A673 (cell line): ENCODE measurements at regions of chr21 and their contacts with region 1.

Region 1: DNA sequence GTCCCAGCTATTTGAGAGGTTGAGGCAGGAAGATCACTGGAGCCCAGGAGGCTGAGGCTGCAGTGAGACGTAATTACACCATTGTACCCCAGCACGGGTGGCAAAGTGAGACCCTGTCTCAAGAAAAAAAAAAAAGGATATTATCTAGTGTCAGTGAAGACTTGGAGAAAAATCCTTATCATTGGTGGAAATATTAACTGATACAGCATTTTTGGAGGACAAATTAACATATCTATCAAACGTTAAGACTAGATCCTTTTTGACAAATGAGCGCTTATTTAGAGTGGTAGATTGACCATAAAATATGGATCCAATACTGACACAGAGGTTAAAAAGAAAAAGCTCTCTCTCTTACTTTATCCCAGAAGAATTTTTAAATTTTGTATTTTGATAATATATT is 35.2 kb upstream of the DYRK1A start:
- DNase-seq: no peak
- H3K4me3 ChIP-seq: no peak overlapping the region
- H3K27ac ChIP-seq: no peak overlapping the region
- H3K4me1 ChIP-seq: no peaks in the 10 kb centered on the region
- H3K27me3 ChIP-seq: no peaks in the 10 kb centered on the region
- CTCF ChIP-seq: no peak

Region 2: DNA sequence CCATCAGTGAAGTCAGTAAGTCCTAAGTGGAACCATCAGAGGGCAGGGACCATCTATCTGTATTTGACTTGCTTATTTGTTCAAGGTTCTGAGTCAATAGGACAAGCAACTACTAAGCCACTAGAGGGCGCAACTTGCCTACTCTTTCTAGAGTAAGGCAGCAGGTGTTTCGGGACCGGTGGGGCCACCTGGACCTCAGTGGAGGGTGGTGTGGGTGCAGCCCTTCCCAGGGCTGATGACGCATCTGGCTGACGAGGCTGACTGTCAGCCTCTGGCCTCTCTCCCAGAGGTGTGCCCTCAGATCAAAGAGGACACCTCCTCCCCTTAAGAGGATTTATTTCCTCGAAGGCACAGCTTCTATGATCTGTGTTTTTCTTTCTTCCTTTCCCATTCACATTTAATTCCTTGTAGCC is 1189.9 kb before region 1 on chr21:
- CTCF ChIA-PET with region 1: no interaction called
- POLR2A ChIA-PET with region 1: no interaction called
- intact Hi-C with region 1: no loop called
- DNase-seq: peak; percentile 82
- H3K4me3 ChIP-seq: no peak overlapping the region
- H3K27ac ChIP-seq: no peak overlapping the region
- H3K4me1 ChIP-seq: peaks cover 6% of the 10 kb centered on the region
- H3K27me3 ChIP-seq: no peaks in the 10 kb centered on the region
- CTCF ChIP-seq: peak; percentile 91

Region 3: DNA sequence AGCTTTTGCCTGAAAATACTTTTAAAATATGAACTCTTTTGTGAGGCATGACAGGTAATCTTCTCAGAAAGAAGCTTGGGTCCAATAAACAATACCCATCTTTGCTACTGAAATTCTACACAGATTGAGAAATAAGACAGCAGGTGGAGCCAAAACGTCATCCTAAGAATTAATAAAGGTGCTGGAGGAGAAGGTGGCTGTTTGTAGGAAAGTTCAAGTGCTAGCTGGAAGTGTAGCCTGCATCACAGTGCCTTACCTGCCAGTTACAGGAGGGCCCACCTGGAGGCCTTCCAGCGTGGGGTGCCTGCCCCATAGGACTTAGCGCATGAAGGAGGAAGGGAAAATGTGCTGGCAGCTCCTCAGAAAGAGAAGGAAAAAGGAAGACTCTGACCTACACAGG is 164.7 kb before region 1 on chr21:
- CTCF ChIA-PET with region 1: no interaction called
- POLR2A ChIA-PET with region 1: no interaction called
- intact Hi-C with region 1: no loop called
- DNase-seq: no peak
- H3K4me3 ChIP-seq: no peak overlapping the region
- H3K27ac ChIP-seq: no peak overlapping the region
- H3K4me1 ChIP-seq: peaks cover 16% of the 10 kb centered on the region
- H3K27me3 ChIP-seq: no peaks in the 10 kb centered on the region
- CTCF ChIP-seq: peak; percentile 40

Region 4: GRCh38 chr21:37244501-37245083 is 86.8 kb before region 1 on chr21:
- CTCF ChIA-PET with region 1: no interaction called
- POLR2A ChIA-PET with region 1: interaction called, 12 read pairs
- intact Hi-C with region 1: no loop called
- DNase-seq: no peak
- H3K4me3 ChIP-seq: no peak overlapping the region
- H3K27ac ChIP-seq: no peak overlapping the region
- H3K4me1 ChIP-seq: peaks cover 5% of the 10 kb centered on the region
- H3K27me3 ChIP-seq: no peaks in the 10 kb centered on the region
- CTCF ChIP-seq: no peak

Region 5: DNA sequence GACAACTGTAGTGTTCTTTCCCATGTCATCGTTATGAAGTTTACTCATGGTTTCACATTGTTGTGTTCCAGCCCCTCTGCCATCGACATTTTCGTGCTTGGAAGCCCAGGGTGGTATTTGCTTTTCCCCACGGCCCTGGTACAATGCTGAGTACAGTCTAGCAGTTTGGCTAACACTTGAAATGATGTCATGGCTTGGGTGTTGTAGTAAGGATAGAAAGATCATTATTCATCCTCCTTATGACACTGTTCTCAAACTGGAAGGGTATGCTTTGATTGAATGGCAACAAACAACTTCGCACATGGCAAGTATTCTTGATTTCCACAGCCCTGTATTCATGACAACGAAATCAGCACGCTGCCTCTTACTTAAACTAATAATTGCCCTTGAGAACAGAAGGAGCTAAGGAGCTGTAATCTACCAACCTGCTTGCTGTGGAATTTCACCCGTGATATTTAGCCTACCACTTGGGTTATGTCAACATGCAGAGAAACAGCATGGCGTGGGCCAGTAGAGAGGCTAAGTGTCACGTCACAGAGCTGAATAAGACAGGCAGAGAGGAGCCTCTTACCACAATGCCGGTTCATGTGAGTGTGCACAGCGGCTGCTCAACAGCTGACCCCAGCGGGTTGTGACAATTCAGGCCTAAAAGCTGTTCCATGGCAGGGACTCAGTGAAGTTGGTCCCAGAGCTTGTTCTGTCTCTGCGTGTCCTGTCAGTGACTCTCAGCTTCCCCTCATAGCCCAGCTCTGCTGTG is 510.9 kb after region 1 on chr21:
- CTCF ChIA-PET with region 1: no interaction called
- POLR2A ChIA-PET with region 1: no interaction called
- intact Hi-C with region 1: no loop called
- DNase-seq: no peak
- H3K4me3 ChIP-seq: no peak overlapping the region
- H3K27ac ChIP-seq: no peak overlapping the region
- H3K4me1 ChIP-seq: no peaks in the 10 kb centered on the region
- H3K27me3 ChIP-seq: peaks cover 17% of the 10 kb centered on the region
- CTCF ChIP-seq: no peak